Pancreas (tissue), 10 donors: ENCODE measurements at regions of chr11 and their contacts with region 1.

Region 1: DNA sequence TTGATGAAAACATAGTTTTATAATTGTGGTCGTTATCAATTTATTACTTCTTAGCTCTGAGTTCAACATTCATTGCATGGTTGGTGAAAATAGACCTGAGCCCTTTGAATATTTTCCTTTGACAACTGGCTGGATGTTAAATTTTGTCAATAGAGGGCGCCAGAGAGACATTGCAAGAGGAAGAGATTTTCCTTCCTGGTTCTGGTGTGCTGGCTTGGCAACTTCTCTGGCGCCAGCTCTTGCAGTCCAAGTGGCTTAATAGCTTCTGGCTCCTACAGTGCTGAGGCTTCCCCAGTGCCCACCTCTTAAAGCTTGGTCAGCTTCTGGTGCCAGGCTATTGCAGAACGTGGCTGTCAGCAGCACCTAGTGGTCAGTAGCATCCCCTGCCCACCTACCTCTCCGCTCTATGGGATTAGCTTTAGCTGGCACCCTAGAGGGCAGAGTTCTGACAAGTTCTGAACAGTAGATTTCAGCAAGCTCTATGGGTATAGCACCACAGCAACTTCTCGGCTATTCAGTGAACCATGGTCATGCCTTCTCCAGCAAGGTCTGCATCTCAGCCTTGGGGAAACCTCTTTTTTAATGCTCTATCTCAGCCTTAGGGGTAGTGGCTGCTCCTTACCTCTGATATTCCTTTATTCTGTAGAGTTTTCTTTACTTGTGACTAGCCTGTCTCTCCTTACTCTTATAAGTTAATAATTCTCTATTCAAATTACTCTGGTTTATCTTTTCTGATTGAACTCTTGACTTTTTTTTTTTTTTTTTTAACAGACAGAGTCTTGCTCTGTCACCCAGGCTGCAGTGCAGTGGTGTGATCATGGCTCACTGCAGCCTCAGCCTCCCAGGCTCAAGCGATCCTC is 59.4 kb downstream of the ACER3 start:
- DNase-seq: peak; percentile 66 to 84 (median 76)
- ATAC-seq: peak; percentile 92 to 95 (median 92)
- H3K4me3 ChIP-seq: peak overlapping the region in 1 of 4 donors; percentile 22
- H3K27ac ChIP-seq: peak overlapping the region in 2 of 4 donors; percentile 30 to 37
- H3K4me1 ChIP-seq: peaks cover 7 to 37% (median 17%) of the 10 kb centered on the region in 3 donors
- H3K27me3 ChIP-seq: no peaks in the 10 kb centered on the region
- CTCF ChIP-seq: peak; percentile 71 to 93 (median 88)

Region 2: GRCh38 chr11:76807206-76807875 is 112.8 kb before region 1 on chr11:
- intact Hi-C with region 1: loop called in 2 of 3 experiments (anchors 5 to 10 kb)
- DNase-seq: peak; percentile 66 to 94 (median 86)
- ATAC-seq: peak; percentile 79 to 90 (median 86)
- H3K4me3 ChIP-seq: peak overlapping the region in 2 of 4 donors; percentile 7 to 12
- H3K27ac ChIP-seq: no peak overlapping the region
- H3K4me1 ChIP-seq: peaks cover 0 to 11% (median 10%) of the 10 kb centered on the region in 3 donors
- H3K27me3 ChIP-seq: no peaks in the 10 kb centered on the region
- CTCF ChIP-seq: peak; percentile 69 to 85 (median 75)

Region 3: DNA sequence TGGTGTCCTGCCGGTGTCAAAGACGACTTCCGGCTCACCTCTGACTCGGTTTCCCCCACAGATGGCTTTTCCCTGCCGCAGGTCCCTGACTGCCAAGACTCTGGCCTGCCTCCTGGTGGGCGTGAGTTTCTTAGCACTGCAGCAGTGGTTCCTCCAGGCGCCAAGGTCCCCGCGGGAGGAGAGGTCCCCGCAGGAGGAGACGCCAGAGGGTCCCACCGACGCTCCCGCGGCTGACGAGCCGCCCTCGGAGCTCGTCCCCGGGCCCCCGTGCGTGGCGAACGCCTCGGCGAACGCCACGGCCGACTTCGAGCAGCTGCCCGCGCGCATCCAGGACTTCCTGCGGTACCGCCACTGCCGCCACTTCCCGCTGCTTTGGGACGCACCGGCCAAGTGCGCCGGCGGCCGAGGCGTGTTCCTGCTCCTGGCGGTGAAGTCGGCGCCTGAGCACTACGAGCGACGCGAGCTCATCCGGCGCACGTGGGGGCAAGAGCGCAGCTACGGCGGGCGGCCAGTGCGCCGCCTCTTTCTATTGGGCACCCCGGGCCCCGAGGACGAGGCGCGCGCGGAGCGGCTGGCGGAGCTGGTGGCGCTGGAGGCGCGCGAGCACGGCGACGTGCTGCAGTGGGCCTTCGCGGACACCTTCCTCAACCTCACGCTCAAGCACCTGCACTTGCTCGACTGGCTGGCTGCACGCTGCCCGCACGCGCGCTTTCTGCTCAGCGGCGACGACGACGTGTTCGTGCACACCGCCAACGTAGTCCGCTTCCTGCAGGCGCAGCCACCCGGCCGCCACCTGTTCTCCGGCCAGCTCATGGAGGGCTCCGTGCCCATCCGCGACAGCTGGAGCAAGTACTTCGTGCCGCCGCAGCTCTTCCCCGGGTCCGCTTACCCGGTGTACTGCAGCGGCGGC is 119.6 kb after region 1 on chr11:
- intact Hi-C with region 1: loop called in 1 of 3 experiments (anchors 5 kb)
- DNase-seq: peak in 5 of 6 donors; percentile 53 to 78 (median 61)
- ATAC-seq: peak; percentile 46 to 78 (median 74)
- H3K4me3 ChIP-seq: peak overlapping the region; percentile 16 to 54 (median 24)
- H3K27ac ChIP-seq: no peak overlapping the region
- H3K4me1 ChIP-seq: peaks cover 0 to 13% (median 8%) of the 10 kb centered on the region in 3 donors
- H3K27me3 ChIP-seq: peaks cover 0 to 6% (median 0%) of the 10 kb centered on the region in 4 donors
- CTCF ChIP-seq: peak in 3 of 4 donors; percentile 27 to 40 (median 36)